K562 (cell line): ENCODE measurements at regions of chr9 and their contacts with region 1.

Region 1: GRCh38 chr9:113523421-113524236 is 60.1 kb downstream of the RGS3 start:
- DNase-seq: peak in 1 of 4 experiments; percentile 23
- ATAC-seq: no peak; the same call in none of the 3 replicates
- H3K4me3 ChIP-seq: no peak overlapping the region
- H3K27ac ChIP-seq: no peak overlapping the region
- H3K4me1 ChIP-seq: peaks cover 0 to 6% of the 10 kb centered on the region in 2 experiments; a peak in 2 of 5 replicates
- H3K27me3 ChIP-seq: peaks cover 40 to 70% of the 10 kb centered on the region in 2 experiments
- CTCF ChIP-seq: no peak
- EP300 ChIP-seq: no peak
- POLR2A ChIP-seq: no peak
- RAD21 ChIP-seq: no peak

Region 2: GRCh38 chr9:113574441-113575107 is 50.9 kb after region 1 on chr9:
- CTCF ChIA-PET with region 1: no interaction called
- POLR2A ChIA-PET with region 1: no interaction called
- in situ Hi-C with region 1: no loop called
- intact Hi-C with region 1: loop called (anchors 5 kb)
- DNase-seq: no peak
- ATAC-seq: no peak
- H3K4me3 ChIP-seq: no peak overlapping the region
- H3K27ac ChIP-seq: no peak overlapping the region
- H3K4me1 ChIP-seq: peaks cover 21 to 37% of the 10 kb centered on the region in 2 experiments
- H3K27me3 ChIP-seq: no peaks in the 10 kb centered on the region
- CTCF ChIP-seq: no peak
- EP300 ChIP-seq: no peak
- POLR2A ChIP-seq: no peak
- RAD21 ChIP-seq: no peak